ENCODE measurements at regions of chr5 and their contacts with region 1.

Region 1: DNA sequence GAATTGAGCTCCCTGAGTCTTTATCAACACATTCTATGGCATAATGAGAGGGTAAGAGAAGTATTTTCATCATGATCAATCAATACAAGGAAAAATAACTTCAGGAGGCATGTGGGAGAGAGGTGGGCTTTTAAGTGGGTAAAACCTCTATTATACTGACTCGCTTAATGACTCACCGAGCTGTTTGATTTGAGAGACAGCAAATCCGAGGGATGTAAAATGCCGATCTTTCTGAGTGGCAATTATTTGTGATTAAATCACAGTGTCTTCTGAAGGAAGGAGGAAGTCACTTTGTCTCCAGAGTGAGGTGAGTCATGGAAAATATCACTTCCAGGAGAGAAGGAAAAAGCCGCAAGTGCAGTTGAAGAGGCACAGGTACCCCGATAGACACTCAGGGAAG is 320.4 kb downstream of the DRD1 start:
- DNase-seq: no peak
- ATAC-seq: no peak
- H3K4me3 ChIP-seq: no peak overlapping the region
- H3K27ac ChIP-seq: no peak overlapping the region
- H3K4me1 ChIP-seq: no peaks in the 10 kb centered on the region
- H3K27me3 ChIP-seq: no peaks in the 10 kb centered on the region
- CTCF ChIP-seq: no peak
- POLR2A ChIP-seq: no peak
- RAD21 ChIP-seq: no peak

Region 2: DNA sequence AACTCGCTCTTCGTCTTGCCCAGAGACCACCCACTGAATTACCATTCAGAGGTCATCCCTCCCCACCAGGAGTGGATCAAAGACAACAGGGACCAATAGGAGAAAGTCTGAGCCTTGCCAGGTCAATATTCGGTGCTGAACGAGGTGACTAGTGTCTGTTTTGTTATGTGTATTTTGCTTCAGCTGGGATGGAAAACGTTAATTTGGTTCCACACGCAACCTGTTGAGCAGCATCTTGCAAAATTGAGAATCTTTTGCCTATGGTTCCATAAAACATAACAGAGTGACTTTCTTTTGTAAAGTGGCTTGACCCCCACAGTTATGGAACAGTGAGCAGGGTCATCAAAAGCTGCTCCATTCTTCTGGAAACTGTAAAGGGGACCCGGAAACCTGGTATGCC is 230.8 kb before region 1 on chr5:
- CTCF ChIA-PET with region 1: no interaction called
- POLR2A ChIA-PET with region 1: no interaction called
- dilution Hi-C with region 1: no loop called
- in situ Hi-C with region 1: no loop called
- intact Hi-C with region 1: no loop called
- DNase-seq: no peak
- ATAC-seq: no peak
- H3K4me3 ChIP-seq: no peak overlapping the region
- H3K27ac ChIP-seq: no peak overlapping the region
- H3K4me1 ChIP-seq: no peaks in the 10 kb centered on the region
- H3K27me3 ChIP-seq: no peaks in the 10 kb centered on the region
- CTCF ChIP-seq: no peak
- POLR2A ChIP-seq: no peak
- RAD21 ChIP-seq: no peak

Region 3: GRCh38 chr5:175168882-175169507 is 45.5 kb after region 1 on chr5:
- CTCF ChIA-PET with region 1: no interaction called
- POLR2A ChIA-PET with region 1: interaction called, 14 read pairs
- dilution Hi-C with region 1: no loop called
- in situ Hi-C with region 1: no loop called
- intact Hi-C with region 1: no loop called
- DNase-seq: no peak
- ATAC-seq: no peak
- H3K4me3 ChIP-seq: no peak overlapping the region
- H3K27ac ChIP-seq: no peak overlapping the region
- H3K4me1 ChIP-seq: no peaks in the 10 kb centered on the region
- H3K27me3 ChIP-seq: peaks cover 2% of the 10 kb centered on the region
- CTCF ChIP-seq: no peak
- POLR2A ChIP-seq: no peak
- RAD21 ChIP-seq: no peak